ENCODE measurements at regions of chr17 and their contacts with region 1.

Region 1: DNA sequence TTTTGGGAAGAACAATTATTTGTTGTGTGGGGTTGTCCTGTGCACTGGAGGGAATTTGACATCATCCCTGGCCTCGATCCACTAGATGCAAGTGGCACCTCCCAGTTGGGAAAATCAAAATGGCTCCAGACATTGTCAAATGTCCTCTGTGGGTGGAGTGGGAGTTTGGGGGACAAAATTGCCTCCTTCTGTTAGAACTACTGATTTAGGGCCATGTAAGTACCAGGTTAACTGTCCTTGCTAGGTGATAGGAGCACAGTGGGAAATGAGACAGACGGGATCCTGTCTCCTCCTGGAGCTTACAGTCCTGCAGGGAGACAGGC is 56.8 kb downstream of the ARHGAP23 start:
- DNase-seq: no peak
- H3K4me3 ChIP-seq: no peak overlapping the region
- H3K27ac ChIP-seq: no peak overlapping the region
- H3K4me1 ChIP-seq: no peaks in the 10 kb centered on the region
- H3K27me3 ChIP-seq: no peaks in the 10 kb centered on the region
- CTCF ChIP-seq: no peak; the same call in 1 of the 2 replicates

Region 2: GRCh38 chr17:38428112-38428642 is 56.9 kb before region 1 on chr17 and contains the start of gene ARHGAP23:
- CTCF ChIA-PET with region 1: no interaction called
- POLR2A ChIA-PET with region 1: no interaction called
- intact Hi-C with region 1: loop called (anchors 1 kb)
- DNase-seq: peak; percentile 54 to 69
- H3K4me3 ChIP-seq: peak within 1 kb of the TSS; percentile 84
- H3K27ac ChIP-seq: 0 out of 2 replicates have a peak within 1 kb of the TSS, but pooled peaks have one; percentile 4
- H3K4me1 ChIP-seq: peaks cover 34% of the 10 kb centered on the region
- H3K27me3 ChIP-seq: no peaks in the 10 kb centered on the region
- CTCF ChIP-seq: no peak
- total RNA-seq, gene ARHGAP23: 129 and 137 TPM in 2 replicates

Measured in PC-9 (cell line).